PC-9 (cell line): ENCODE measurements at regions of chr3 and their contacts with region 1.

Region 1: GRCh38 chr3:8663177-8664061 is 18.8 kb upstream of the SSUH2 start:
- DNase-seq: peak; percentile 76 to 81
- H3K4me3 ChIP-seq: no peak overlapping the region
- H3K27ac ChIP-seq: no peak overlapping the region
- H3K4me1 ChIP-seq: peaks cover 21% of the 10 kb centered on the region
- H3K27me3 ChIP-seq: no peaks in the 10 kb centered on the region
- CTCF ChIP-seq: peak; percentile 82

Region 2: GRCh38 chr3:8441969-8442559 is 221.4 kb before region 1 on chr3:
- CTCF ChIA-PET with region 1: no interaction called
- POLR2A ChIA-PET with region 1: no interaction called
- intact Hi-C with region 1: loop called (anchors 1 kb)
- DNase-seq: peak in 1 of 2 experiments; percentile 8
- H3K4me3 ChIP-seq: no peak overlapping the region
- H3K27ac ChIP-seq: no peak overlapping the region
- H3K4me1 ChIP-seq: peaks cover 25% of the 10 kb centered on the region
- H3K27me3 ChIP-seq: no peaks in the 10 kb centered on the region
- CTCF ChIP-seq: peak; percentile 84

Region 3: DNA sequence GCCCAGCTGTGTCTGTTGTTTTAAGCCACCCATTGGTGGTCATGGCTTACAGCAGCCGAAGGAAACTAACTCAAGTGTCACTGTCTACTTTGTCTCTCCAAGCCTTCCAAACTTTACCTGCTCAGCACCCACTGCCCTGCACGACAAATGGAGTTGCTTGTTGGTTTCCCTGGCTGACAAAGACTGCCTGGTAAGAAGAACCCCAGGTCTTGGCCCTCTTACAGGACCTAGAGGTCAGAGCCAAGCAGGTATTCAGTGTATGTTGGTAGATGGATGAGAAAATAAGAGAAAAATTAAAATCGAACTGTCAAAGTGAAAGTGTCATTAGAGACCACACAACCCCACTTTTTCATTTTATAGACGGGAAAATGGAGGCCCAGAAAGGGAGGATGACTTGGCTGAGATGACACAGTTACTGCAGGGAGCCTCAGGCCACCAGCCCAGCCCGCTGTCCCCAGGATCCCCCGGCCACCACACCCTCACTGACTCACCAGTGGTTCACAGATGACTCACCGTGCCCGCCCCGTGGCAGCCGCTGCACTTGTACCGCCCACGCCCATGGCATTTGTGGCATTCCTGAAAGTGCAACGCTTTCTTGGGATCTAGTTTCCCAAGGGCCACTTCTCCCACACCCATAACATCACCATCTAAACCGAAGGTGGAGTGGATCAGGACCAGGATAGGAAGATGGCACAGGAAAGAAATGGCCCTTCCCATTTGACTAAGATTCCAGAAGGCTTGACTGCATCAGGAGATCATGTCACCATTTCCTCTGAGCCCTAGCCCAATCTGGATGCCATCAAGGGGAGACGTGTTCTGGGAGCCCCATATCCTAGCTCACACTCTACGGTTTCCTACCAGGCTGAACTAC is 34.0 kb before region 1 on chr3:
- CTCF ChIA-PET with region 1: interaction called, 4 read pairs
- POLR2A ChIA-PET with region 1: no interaction called
- intact Hi-C with region 1: loop called (anchors 1 kb)
- DNase-seq: peak; percentile 90 to 91
- H3K4me3 ChIP-seq: no peak overlapping the region
- H3K27ac ChIP-seq: peak overlapping the region; percentile 90
- H3K4me1 ChIP-seq: peaks cover 27% of the 10 kb centered on the region
- H3K27me3 ChIP-seq: no peaks in the 10 kb centered on the region
- CTCF ChIP-seq: no peak

Region 4: GRCh38 chr3:8741581-8742261 is 78.3 kb after region 1 on chr3:
- CTCF ChIA-PET with region 1: interaction called, 3 read pairs
- POLR2A ChIA-PET with region 1: no interaction called
- intact Hi-C with region 1: loop called (anchors 2 kb)
- DNase-seq: peak; percentile 80 to 82
- H3K4me3 ChIP-seq: no peak overlapping the region
- H3K27ac ChIP-seq: peak overlapping the region; percentile 67
- H3K4me1 ChIP-seq: peaks cover 60% of the 10 kb centered on the region
- H3K27me3 ChIP-seq: no peaks in the 10 kb centered on the region
- CTCF ChIP-seq: no peak

Region 5: DNA sequence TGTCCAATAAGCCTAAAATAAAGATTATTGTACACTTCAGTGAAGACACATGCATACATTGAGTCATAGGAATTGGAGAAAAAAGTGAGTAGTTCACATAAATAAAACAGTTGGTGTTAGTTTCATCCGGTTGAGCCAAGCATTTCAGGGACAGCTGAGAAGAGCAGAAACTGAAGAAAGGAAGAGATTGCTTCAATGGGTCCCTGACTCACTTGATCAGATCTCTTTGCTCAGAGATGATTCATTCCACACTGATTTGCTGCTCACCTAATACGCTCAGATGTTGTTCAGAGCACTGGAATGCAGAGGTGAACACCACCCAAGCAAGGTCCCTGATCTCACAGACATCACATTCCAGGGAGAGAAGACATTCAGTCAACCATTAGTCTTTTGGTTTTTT is 206.2 kb after region 1 on chr3:
- CTCF ChIA-PET with region 1: no interaction called
- POLR2A ChIA-PET with region 1: no interaction called
- intact Hi-C with region 1: loop called (anchors 1 kb)
- DNase-seq: peak; percentile 70 to 98
- H3K4me3 ChIP-seq: no peak overlapping the region
- H3K27ac ChIP-seq: peak overlapping the region; percentile 94
- H3K4me1 ChIP-seq: peaks cover 29% of the 10 kb centered on the region
- H3K27me3 ChIP-seq: no peaks in the 10 kb centered on the region
- CTCF ChIP-seq: no peak

Region 6: GRCh38 chr3:9067352-9067975 is 404.0 kb after region 1 on chr3:
- CTCF ChIA-PET with region 1: no interaction called
- POLR2A ChIA-PET with region 1: no interaction called
- intact Hi-C with region 1: loop called (anchors 1 kb)
- DNase-seq: peak in 1 of 2 experiments; percentile 33
- H3K4me3 ChIP-seq: no peak overlapping the region
- H3K27ac ChIP-seq: no peak overlapping the region
- H3K4me1 ChIP-seq: no peaks in the 10 kb centered on the region
- H3K27me3 ChIP-seq: no peaks in the 10 kb centered on the region
- CTCF ChIP-seq: peak; percentile 96

Region 7: DNA sequence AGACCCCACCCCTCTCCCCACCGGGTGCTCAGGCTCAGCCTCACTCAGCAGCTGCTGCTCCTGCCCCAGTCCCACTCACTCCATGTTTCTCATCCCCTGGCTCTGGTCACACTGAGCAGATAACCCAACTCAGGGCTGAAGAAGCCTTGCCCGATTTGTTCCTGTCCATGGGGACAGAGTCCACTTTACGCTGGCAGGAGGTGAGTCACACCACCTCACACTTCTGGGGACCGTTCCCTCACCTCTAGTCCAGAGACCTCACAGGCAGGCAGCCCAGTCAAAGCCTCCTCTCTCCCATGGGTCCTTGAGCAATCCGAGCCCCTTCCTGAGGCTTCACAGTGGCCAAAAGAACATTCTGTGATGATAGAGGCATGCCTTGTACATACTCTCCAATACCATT is 1215.3 kb after region 1 on chr3:
- CTCF ChIA-PET with region 1: no interaction called
- POLR2A ChIA-PET with region 1: no interaction called
- intact Hi-C with region 1: no loop called
- DNase-seq: no peak
- H3K4me3 ChIP-seq: no peak overlapping the region
- H3K27ac ChIP-seq: no peak overlapping the region
- H3K4me1 ChIP-seq: peaks cover 31% of the 10 kb centered on the region
- H3K27me3 ChIP-seq: no peaks in the 10 kb centered on the region
- CTCF ChIP-seq: no peak